Right cardiac atrium (tissue), 5 donors: ENCODE measurements at regions of chr17 and their contacts with region 1.

Region 1: GRCh38 chr17:8894673-8895578 is 27.5 kb upstream of the PIK3R6 start:
- DNase-seq: peak in 2 of 3 donors; percentile 46 to 77
- ATAC-seq: peak; percentile 72 to 83
- H3K4me3 ChIP-seq: peak overlapping the region; percentile 5
- H3K27ac ChIP-seq: no peak overlapping the region
- H3K4me1 ChIP-seq: no peaks in the 10 kb centered on the region
- H3K27me3 ChIP-seq: no peaks in the 10 kb centered on the region

Region 2: GRCh38 chr17:8806926-8807550 is 87.9 kb before region 1 on chr17:
- intact Hi-C with region 1: loop called in 2 of 4 experiments (anchors 10 kb)
- DNase-seq: no peak
- ATAC-seq: peak in 1 of 2 donors; percentile 26
- H3K4me3 ChIP-seq: no peak overlapping the region
- H3K27ac ChIP-seq: no peak overlapping the region
- H3K4me1 ChIP-seq: no peaks in the 10 kb centered on the region
- H3K27me3 ChIP-seq: no peaks in the 10 kb centered on the region